ENCODE measurements at regions of chr5 and their contacts with region 1.

Region 1: DNA sequence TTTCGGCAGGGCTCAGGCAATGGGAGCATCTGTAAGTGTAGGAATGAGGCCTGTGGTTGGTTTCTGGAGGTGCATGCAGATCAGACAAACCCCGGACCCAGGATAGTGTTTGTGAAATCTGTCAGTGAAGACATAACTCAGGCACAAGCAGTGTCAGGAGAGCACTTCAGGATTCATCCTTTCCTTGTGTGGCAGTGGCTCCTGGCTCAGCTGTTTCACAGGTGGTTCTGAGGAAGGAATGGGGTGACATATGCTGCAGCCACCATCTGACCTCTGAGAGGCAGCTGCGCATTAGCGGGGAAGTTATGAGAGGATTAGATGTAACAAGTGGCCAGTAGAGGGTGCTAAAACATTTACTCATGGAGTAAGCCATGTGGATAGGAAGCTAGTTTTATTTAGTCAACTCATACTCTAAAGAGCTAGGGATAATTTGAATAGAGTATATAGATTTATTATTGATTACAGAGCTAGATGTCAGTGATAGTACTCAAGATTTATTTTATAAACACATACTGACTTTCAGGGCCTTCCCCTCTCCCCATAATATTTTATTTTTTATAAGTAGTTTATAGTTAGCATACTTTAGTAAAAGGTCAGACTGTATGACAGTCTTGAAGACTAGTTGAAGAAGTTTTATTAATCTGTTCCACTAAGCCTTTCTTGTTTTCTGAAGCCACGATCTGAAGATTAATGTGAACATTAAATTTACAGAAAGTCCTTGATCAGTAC is 28.4 kb downstream of the NNT start:
- DNase-seq: peak; percentile 14
- ATAC-seq: peak; percentile 76
- H3K4me3 Mint-ChIP-seq: no peak overlapping the region
- H3K27ac Mint-ChIP-seq: no peak overlapping the region
- H3K4me1 Mint-ChIP-seq: no peaks in the 10 kb centered on the region
- H3K27me3 Mint-ChIP-seq: no peaks in the 10 kb centered on the region
- CTCF ChIP-seq: no peak

Region 2: GRCh38 chr5:43491324-43491723 is 140.0 kb before region 1 on chr5:
- CTCF ChIA-PET with region 1: no interaction called
- POLR2A ChIA-PET with region 1: no interaction called
- intact Hi-C with region 1: no loop called
- DNase-seq: no peak
- ATAC-seq: no peak
- H3K4me3 Mint-ChIP-seq: no peak overlapping the region
- H3K27ac Mint-ChIP-seq: no peak overlapping the region
- H3K4me1 Mint-ChIP-seq: no peaks in the 10 kb centered on the region
- H3K27me3 Mint-ChIP-seq: no peaks in the 10 kb centered on the region
- CTCF ChIP-seq: no peak

Region 3: GRCh38 chr5:43616535-43616934 is 14.8 kb before region 1 on chr5:
- CTCF ChIA-PET with region 1: interaction called, 10 read pairs
- POLR2A ChIA-PET with region 1: no interaction called
- intact Hi-C with region 1: no loop called
- DNase-seq: no peak
- ATAC-seq: no peak
- H3K4me3 Mint-ChIP-seq: no peak overlapping the region
- H3K27ac Mint-ChIP-seq: no peak overlapping the region
- H3K4me1 Mint-ChIP-seq: no peaks in the 10 kb centered on the region
- H3K27me3 Mint-ChIP-seq: no peaks in the 10 kb centered on the region
- CTCF ChIP-seq: no peak

Region 4: GRCh38 chr5:44332285-44332971 is 701.1 kb after region 1 on chr5:
- CTCF ChIA-PET with region 1: no interaction called
- POLR2A ChIA-PET with region 1: no interaction called
- intact Hi-C with region 1: loop called (anchors 5 kb)
- DNase-seq: no peak
- ATAC-seq: no peak
- H3K4me3 Mint-ChIP-seq: no peak overlapping the region
- H3K27ac Mint-ChIP-seq: no peak overlapping the region
- H3K4me1 Mint-ChIP-seq: no peaks in the 10 kb centered on the region
- H3K27me3 Mint-ChIP-seq: no peaks in the 10 kb centered on the region
- CTCF ChIP-seq: no peak

Region 5: GRCh38 chr5:44774279-44774880 is 1143.0 kb after region 1 on chr5:
- CTCF ChIA-PET with region 1: interaction called, 4 read pairs
- POLR2A ChIA-PET with region 1: no interaction called
- intact Hi-C with region 1: loop called (anchors 1 kb)
- DNase-seq: no peak
- ATAC-seq: no peak
- H3K4me3 Mint-ChIP-seq: no peak overlapping the region
- H3K27ac Mint-ChIP-seq: no peak overlapping the region
- H3K4me1 Mint-ChIP-seq: no peaks in the 10 kb centered on the region
- H3K27me3 Mint-ChIP-seq: peaks cover 4% of the 10 kb centered on the region
- CTCF ChIP-seq: no peak